Activated CD4-positive, alpha-beta memory T cell treated with anti-CD3 and anti-CD28 coated beads for 36 hours (primary cell): ENCODE measurements at regions of chr11 and their contacts with region 1.

Region 1: GRCh38 chr11:86291466-86292262 is 10.4 kb upstream of the HIKESHI start:
- DNase-seq: peak; percentile 82
- H3K4me3 Mint-ChIP-seq: peak overlapping the region; percentile 30
- H3K27ac Mint-ChIP-seq: peak overlapping the region; percentile 95
- H3K4me1 Mint-ChIP-seq: peaks cover 68% of the 10 kb centered on the region
- H3K27me3 Mint-ChIP-seq: no peaks in the 10 kb centered on the region

Region 2: GRCh38 chr11:85826116-85826855 is 465.4 kb before region 1 on chr11:
- CTCF ChIA-PET with region 1: no interaction called
- POLR2A ChIA-PET with region 1: no interaction called
- intact Hi-C with region 1: loop called (anchors 2 kb)
- DNase-seq: peak; percentile 41
- H3K4me3 Mint-ChIP-seq: no peak overlapping the region
- H3K27ac Mint-ChIP-seq: peak overlapping the region; percentile 9
- H3K4me1 Mint-ChIP-seq: peaks cover 71% of the 10 kb centered on the region
- H3K27me3 Mint-ChIP-seq: no peaks in the 10 kb centered on the region

Region 3: GRCh38 chr11:86047275-86047991 is 244.2 kb before region 1 on chr11:
- CTCF ChIA-PET with region 1: interaction called, 17 read pairs
- POLR2A ChIA-PET with region 1: interaction called, 3 read pairs
- intact Hi-C with region 1: loop called (anchors 1 kb)
- DNase-seq: peak; percentile 81
- H3K4me3 Mint-ChIP-seq: peak overlapping the region; percentile 60
- H3K27ac Mint-ChIP-seq: peak overlapping the region; percentile 99
- H3K4me1 Mint-ChIP-seq: peaks cover 93% of the 10 kb centered on the region
- H3K27me3 Mint-ChIP-seq: no peaks in the 10 kb centered on the region

Region 4: GRCh38 chr11:86174101-86175046 is 117.3 kb before region 1 on chr11:
- CTCF ChIA-PET with region 1: interaction called, 3 read pairs
- POLR2A ChIA-PET with region 1: no interaction called
- intact Hi-C with region 1: loop called (anchors 1 kb)
- DNase-seq: peak; percentile 36
- H3K4me3 Mint-ChIP-seq: no peak overlapping the region
- H3K27ac Mint-ChIP-seq: no peak overlapping the region
- H3K4me1 Mint-ChIP-seq: peaks cover 28% of the 10 kb centered on the region
- H3K27me3 Mint-ChIP-seq: no peaks in the 10 kb centered on the region

Region 5: GRCh38 chr11:86230921-86231430 is 60.7 kb before region 1 on chr11:
- CTCF ChIA-PET with region 1: interaction called, 4 read pairs
- POLR2A ChIA-PET with region 1: no interaction called
- intact Hi-C with region 1: loop called (anchors 1 kb)
- DNase-seq: no peak
- H3K4me3 Mint-ChIP-seq: no peak overlapping the region
- H3K27ac Mint-ChIP-seq: peak overlapping the region; percentile 77
- H3K4me1 Mint-ChIP-seq: peaks cover 66% of the 10 kb centered on the region
- H3K27me3 Mint-ChIP-seq: no peaks in the 10 kb centered on the region

Region 6: DNA sequence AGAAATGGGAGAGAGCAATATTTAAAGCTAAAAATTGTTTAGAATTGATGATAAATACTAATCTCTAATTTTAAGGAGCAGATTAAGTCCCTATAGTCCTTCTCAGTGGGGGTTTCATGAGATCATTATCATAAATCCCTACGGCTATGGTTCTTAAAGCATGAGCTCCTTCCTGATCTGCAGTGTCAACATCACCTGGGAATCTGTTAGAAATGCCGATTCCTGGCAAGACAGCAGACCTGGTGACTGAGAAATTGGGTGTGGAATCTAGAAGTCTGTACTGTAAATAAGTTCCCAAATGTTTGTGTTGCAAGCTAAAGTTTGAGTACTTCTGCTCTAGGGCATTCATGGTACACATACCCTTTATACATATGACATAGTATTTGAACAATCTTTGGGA is 23.0 kb after region 1 on chr11:
- CTCF ChIA-PET with region 1: no interaction called
- POLR2A ChIA-PET with region 1: no interaction called
- intact Hi-C with region 1: no loop called
- DNase-seq: no peak
- H3K4me3 Mint-ChIP-seq: no peak overlapping the region
- H3K27ac Mint-ChIP-seq: no peak overlapping the region
- H3K4me1 Mint-ChIP-seq: peaks cover 19% of the 10 kb centered on the region
- H3K27me3 Mint-ChIP-seq: no peaks in the 10 kb centered on the region

Region 7: DNA sequence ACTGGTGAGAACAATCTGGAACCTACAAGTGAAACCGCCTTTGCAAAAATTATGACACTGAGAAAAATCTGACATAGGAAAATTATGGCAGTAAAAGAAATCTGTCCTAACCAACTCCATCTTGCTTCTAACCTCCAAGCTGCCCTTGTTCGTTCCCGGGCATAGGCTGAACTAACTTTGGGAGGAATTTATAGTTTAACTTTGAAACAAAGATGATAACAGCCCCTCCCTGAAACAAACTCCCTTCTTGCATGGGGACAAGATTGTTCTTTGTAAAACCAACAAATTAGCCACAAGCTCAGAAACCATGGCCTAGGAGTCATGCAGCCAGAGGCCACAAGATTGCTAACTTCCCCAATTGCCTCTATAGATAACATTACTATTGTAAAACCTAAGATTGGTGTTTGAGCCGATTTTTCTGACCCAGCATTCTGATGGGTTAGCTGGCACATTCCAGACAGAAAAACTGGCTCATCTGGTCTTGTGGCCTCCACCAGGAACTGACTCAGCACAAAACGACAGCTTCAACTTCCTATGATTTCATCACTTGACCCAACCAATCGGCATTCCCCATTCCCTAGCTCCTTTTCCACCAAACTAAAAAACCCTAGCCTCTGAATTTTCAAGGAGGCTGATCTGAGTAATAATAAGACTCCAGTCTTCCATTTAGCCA is 79.4 kb after region 1 on chr11:
- CTCF ChIA-PET with region 1: no interaction called
- POLR2A ChIA-PET with region 1: no interaction called
- intact Hi-C with region 1: no loop called
- DNase-seq: no peak
- H3K4me3 Mint-ChIP-seq: no peak overlapping the region
- H3K27ac Mint-ChIP-seq: no peak overlapping the region
- H3K4me1 Mint-ChIP-seq: peaks cover 4% of the 10 kb centered on the region
- H3K27me3 Mint-ChIP-seq: peaks cover 9% of the 10 kb centered on the region

Region 8: GRCh38 chr11:86592659-86593451 is 301.2 kb after region 1 on chr11:
- CTCF ChIA-PET with region 1: no interaction called
- POLR2A ChIA-PET with region 1: no interaction called
- intact Hi-C with region 1: loop called (anchors 1 kb)
- DNase-seq: peak; percentile 94
- H3K4me3 Mint-ChIP-seq: no peak overlapping the region
- H3K27ac Mint-ChIP-seq: peak overlapping the region; percentile 66
- H3K4me1 Mint-ChIP-seq: peaks cover 51% of the 10 kb centered on the region
- H3K27me3 Mint-ChIP-seq: peaks cover 4% of the 10 kb centered on the region